ENCODE measurements at regions of chr4 and their contacts with region 1.

Region 1: DNA sequence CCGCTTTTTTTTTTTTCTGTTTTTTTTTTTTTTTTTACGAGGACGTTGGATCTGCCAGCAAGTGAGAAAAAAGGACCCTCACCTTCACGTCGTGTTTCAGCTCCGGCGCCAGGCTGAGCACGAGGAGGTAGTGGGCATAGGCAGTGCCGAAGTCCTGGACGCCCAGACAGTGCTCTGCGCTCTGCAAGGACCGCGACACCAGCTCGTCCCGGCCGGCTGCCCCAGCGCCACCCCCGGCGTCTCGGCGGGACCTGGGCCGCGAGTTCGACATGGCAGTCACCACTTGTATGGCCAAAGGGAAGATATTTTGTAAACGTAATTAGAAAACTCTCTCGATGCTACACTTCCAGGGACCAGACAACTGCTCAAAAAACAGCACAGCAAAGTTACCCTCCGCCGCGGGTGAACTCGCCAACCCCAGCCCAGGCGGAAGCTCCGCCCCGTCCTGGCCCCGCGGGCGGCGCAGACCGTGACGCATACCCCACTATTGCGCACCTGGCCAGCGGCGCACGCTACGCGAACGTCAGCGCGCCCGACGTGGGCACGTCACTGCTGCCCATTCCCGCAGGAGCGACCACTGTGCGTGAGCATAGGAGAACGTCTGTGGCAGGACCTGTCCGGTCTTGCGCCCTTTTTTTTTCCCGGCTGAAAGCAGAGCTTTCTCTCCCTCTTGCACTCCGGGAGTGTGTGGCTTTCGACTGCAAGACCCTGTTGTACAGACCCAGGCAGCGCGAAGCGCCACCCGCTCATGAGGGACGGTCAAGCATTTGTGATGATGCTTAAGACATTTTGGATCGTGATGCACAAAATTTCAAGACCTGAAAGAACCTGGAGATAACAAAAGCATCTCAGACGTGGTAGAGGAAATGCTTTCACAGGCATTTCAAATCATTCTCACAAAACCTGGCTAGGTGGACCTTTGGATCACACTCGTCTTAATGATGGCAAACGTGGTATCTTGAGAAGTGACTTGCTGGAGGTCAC is at the start of gene PRMT9:
- DNase-seq: peak; percentile 93
- ATAC-seq: peak; percentile 99
- H3K4me3 Mint-ChIP-seq: peak within 1 kb of the TSS; percentile 92
- H3K27ac Mint-ChIP-seq: peak within 1 kb of the TSS; percentile 91
- H3K4me1 Mint-ChIP-seq: peaks cover 25% of the 10 kb centered on the region
- H3K27me3 Mint-ChIP-seq: peaks cover 6% of the 10 kb centered on the region
- total RNA-seq, gene PRMT9: 6.2 to 7.5 TPM

Region 2: DNA sequence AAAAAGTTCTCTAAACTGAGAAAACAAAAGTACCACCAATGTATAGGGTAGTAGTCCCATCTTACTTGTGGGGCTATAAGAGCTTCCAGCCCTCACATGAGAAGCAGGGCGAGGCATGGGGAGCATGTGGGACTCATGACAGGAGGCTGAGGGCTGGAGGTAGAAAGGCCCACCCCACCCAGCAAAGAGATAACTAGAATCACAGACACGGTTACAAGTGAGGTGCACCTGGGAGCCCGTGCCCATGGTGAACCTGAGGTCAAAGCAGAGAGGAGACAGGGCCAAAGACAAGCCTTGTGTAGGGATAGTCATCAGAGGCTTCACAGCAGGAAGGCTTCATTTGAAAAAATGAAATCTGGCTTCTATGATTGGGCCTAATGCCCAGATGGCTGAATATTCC is 793.7 kb before region 1 on chr4:
- CTCF ChIA-PET with region 1: no interaction called
- POLR2A ChIA-PET with region 1: no interaction called
- intact Hi-C with region 1: no loop called
- DNase-seq: no peak
- ATAC-seq: no peak
- H3K4me3 Mint-ChIP-seq: no peak overlapping the region
- H3K27ac Mint-ChIP-seq: no peak overlapping the region
- H3K4me1 Mint-ChIP-seq: peaks cover 2% of the 10 kb centered on the region
- H3K27me3 Mint-ChIP-seq: peaks cover 6% of the 10 kb centered on the region

Region 3: GRCh38 chr4:147409350-147409749 is 274.7 kb before region 1 on chr4:
- CTCF ChIA-PET with region 1: no interaction called
- POLR2A ChIA-PET with region 1: no interaction called
- intact Hi-C with region 1: no loop called
- DNase-seq: no peak
- ATAC-seq: no peak
- H3K4me3 Mint-ChIP-seq: no peak overlapping the region
- H3K27ac Mint-ChIP-seq: no peak overlapping the region
- H3K4me1 Mint-ChIP-seq: no peaks in the 10 kb centered on the region
- H3K27me3 Mint-ChIP-seq: no peaks in the 10 kb centered on the region

Region 4: GRCh38 chr4:147509386-147509785 is 174.6 kb before region 1 on chr4:
- CTCF ChIA-PET with region 1: no interaction called
- POLR2A ChIA-PET with region 1: no interaction called
- intact Hi-C with region 1: no loop called
- DNase-seq: no peak
- ATAC-seq: no peak
- H3K4me3 Mint-ChIP-seq: no peak overlapping the region
- H3K27ac Mint-ChIP-seq: no peak overlapping the region
- H3K4me1 Mint-ChIP-seq: no peaks in the 10 kb centered on the region
- H3K27me3 Mint-ChIP-seq: peaks cover 7% of the 10 kb centered on the region

Region 5: DNA sequence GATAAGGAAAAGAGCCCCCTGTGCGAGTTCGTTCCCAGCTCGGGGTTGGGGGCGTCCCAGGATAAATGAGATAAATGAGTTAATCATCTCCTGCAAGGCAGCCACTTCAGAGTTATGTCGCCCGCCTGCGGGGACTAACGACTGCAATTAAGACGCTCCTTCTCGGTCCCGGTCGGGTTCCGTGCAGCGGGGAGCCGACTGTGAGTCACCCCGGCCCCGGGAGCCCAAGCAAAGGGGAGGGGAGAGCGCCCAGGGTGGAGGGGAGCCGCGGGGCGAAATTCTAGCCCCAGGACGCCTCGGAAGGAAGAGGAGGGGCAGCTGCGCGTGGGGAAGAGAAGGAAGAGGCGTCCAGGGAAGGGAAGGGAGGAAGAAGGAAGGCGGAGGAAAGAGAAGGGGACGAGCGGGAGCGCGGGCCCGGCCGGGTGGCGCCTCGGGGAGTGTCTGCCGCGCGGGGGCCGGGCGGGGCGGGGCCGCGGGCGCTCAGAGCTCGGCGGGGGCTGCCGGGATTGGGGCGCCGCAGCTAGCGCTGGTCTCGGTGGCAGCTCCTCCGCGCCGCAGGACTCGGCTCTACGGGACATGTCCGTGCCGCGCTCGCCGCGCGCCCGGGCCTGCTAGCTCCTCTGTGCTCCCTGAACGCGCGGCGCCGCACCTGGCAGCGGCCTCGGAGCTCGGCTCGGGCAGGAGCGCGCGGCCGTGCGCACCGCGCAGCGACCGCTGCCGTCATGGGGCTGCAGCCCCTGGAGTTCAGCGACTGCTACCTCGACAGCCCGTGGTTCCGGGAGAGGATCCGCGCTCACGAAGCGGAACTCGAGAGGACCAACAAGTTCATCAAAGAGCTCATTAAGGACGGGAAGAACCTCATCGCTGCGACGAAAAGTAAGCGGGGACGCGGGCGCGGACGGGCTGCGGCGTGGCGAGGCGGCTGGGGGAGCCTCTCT is 47.8 kb after region 1 on chr4 and contains the start of gene ARHGAP10:
- CTCF ChIA-PET with region 1: interaction called, 4 read pairs
- POLR2A ChIA-PET with region 1: no interaction called
- intact Hi-C with region 1: loop called (anchors 1 to 2 kb)
- DNase-seq: peak; percentile 83
- ATAC-seq: peak; percentile 82
- H3K4me3 Mint-ChIP-seq: peak within 1 kb of the TSS; percentile 85
- H3K27ac Mint-ChIP-seq: peak within 1 kb of the TSS; percentile 87
- H3K4me1 Mint-ChIP-seq: peaks cover 45% of the 10 kb centered on the region
- H3K27me3 Mint-ChIP-seq: peaks cover 3% of the 10 kb centered on the region
- total RNA-seq, gene ARHGAP10: 6.1 to 6.2 TPM

Region 6: GRCh38 chr4:147749811-147750321 is 65.9 kb after region 1 on chr4:
- CTCF ChIA-PET with region 1: no interaction called
- POLR2A ChIA-PET with region 1: no interaction called
- intact Hi-C with region 1: no loop called
- DNase-seq: no peak
- ATAC-seq: no peak
- H3K4me3 Mint-ChIP-seq: no peak overlapping the region
- H3K27ac Mint-ChIP-seq: no peak overlapping the region
- H3K4me1 Mint-ChIP-seq: peaks cover 7% of the 10 kb centered on the region
- H3K27me3 Mint-ChIP-seq: no peaks in the 10 kb centered on the region